Spleen (tissue), 13 donors: ENCODE measurements at regions of chr17 and their contacts with region 1.

Region 1: DNA sequence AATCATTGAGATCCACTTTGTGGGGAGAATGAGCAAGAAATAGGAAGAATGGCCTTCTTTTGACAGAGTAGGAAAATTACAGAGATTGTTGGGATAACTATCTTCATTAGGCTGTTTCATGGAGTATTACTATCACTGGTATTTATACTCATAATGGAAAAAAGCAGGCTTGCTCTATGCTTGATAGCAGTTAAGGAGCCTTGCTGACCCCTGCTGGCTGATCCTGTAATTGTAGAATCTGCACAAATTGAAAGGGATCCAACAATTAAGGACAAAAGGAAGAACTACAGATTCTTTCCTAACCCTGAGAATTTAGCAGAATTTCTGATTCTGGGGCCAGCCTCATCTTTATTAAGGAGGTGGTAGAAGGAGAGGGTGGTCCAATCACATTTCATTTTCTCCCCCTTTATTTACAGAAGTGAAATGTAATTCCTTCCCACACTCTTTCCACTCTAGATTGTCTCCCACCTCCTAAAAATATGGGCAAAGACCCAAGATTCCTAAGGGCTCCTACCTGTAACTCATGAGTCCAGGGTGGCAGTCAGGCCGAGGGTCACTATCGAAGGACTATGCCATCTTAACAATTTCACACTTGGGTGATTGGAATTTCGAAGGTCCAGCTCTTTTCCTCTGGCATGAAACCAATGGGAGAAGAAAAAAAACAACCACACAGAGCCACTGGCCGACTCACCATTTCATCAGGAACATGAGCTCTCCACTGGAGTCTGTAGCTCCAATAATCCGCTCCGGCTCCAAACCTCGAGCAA is 26.3 kb downstream of the NFE2L1 start:
- DNase-seq: peak; percentile 79
- H3K4me3 ChIP-seq: no peak overlapping the region
- H3K27ac ChIP-seq: no peak overlapping the region
- H3K4me1 ChIP-seq: peaks cover 0 to 16% (median 2%) of the 10 kb centered on the region in 6 donors
- H3K27me3 ChIP-seq: no peaks in the 10 kb centered on the region
- CTCF ChIP-seq: peak; percentile 38 to 87 (median 81)
- POLR2A ChIP-seq: no peak

Region 2: DNA sequence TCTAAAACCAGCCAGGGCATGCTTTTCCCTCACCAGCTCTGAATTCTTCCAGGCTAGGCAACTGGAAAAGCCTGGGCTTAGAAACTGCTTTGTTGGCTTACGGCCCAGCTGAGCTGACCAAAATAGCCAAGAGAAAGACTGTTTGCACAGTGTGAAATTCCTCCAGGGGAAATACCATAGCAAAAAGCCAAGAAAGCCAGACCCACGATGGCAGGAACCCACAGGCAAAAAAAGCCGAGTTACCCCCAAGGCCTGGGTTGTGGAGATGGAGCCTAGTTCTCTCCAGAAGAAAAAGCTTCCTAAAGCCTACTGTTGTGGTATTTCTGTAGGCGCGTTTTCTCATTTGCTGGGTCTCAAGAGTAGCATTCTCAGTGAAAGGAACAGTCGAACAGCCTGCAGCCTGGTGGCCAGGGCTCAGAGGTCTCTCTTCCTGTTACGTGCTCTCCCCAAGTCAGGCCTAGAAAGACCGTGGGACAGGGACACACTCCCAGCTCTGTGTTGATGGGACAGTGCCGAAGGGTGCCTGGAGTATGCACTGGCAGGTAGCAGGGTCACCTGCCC is 169.2 kb before region 1 on chr17:
- intact Hi-C with region 1: no loop called
- DNase-seq: no peak
- H3K4me3 ChIP-seq: no peak overlapping the region
- H3K27ac ChIP-seq: peak overlapping the region in 7 of 8 donors; percentile 35 to 75 (median 67)
- H3K4me1 ChIP-seq: peaks cover 0 to 75% (median 26%) of the 10 kb centered on the region in 6 donors
- H3K27me3 ChIP-seq: no peaks in the 10 kb centered on the region
- CTCF ChIP-seq: no peak
- POLR2A ChIP-seq: no peak

Region 3: DNA sequence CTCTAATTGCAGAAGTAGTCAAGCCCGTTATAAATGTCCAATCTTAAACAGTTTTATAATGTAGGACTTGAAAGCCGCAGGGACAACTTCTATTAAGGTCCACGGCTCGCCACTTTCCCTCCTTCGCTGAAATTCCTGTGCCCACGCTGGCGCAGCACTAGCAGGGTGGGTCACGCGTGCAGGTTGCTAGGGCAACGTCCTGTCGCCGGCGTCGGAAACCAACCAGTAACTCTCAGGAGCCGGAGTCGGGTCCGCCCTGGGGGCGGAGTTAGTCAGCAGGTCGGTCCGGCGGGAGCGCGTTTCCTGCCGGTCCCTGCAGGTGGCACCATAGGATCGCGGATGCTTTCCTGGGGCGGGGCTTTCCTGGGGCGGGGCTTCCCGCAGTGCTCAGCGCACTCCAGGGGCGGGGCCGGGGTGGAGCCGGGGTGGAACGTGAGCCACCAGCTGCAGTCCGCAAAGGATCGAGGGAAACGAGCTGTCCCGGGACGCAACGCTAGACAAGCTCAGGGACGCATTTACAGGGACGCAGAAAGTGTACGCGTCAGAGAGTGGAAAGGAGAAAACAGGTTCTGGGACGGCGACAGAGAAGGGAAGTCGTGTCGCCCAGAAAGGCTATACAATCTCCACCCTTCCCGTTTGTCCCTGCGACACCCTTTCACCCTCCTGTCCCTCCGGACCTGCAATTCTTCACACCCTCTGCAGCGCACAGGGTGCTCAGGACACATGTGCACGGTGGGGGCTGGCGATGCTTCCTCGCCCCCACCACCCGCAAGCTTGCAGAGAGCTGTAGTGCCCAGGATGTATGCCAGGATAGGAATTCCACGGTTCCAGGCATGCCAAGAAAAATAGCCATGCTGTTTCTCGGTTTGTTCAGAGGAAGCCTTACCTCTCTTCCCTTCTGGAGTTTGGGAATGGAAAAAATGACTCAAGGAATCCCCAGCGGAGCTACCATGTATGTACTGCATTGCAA is 49.3 kb before region 1 on chr17:
- intact Hi-C with region 1: loop called (anchors 2 kb)
- DNase-seq: peak; percentile 100
- H3K4me3 ChIP-seq: peak overlapping the region; percentile 33 to 70 (median 50)
- H3K27ac ChIP-seq: peak overlapping the region in 5 of 8 donors; percentile 35 to 82 (median 71)
- H3K4me1 ChIP-seq: peaks cover 26 to 62% (median 44%) of the 10 kb centered on the region in 6 donors
- H3K27me3 ChIP-seq: peaks cover 0 to 45% (median 5%) of the 10 kb centered on the region in 7 donors
- CTCF ChIP-seq: peak; percentile 87 to 99 (median 95)
- POLR2A ChIP-seq: no peak

Region 4: DNA sequence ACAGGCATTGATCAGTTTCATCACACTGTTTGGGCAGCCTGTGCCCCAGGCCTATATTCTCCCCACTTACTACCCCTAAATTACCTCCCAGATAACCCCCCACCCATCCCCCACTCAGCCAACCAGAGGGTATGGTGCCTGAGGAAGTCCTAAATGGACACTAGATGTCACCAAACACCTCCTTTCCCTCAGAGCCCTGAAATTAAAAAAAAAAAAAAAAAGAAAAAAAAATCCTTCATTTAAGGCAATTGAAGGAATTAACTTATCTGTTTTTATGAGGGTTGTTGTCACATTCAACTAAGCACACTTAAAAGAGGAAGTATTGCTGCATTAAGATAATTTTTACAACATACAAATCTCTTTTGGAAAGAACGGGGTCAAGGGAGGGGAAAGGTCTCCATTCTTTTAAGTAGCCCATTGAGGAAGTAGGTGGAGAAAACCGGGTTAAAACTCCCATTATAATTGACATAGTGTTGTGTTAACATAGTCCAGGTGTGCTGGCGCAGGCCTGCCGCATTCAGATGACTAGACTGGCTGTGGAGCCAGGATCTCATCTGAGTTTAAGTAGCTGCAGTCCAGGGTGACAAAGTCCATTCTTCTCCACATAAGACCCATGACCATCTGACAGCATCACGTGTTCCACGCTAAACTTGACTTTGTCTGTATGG is 79.3 kb after region 1 on chr17:
- intact Hi-C with region 1: no loop called
- DNase-seq: no peak
- H3K4me3 ChIP-seq: no peak overlapping the region
- H3K27ac ChIP-seq: no peak overlapping the region
- H3K4me1 ChIP-seq: peaks cover 0 to 11% (median 6%) of the 10 kb centered on the region in 6 donors
- H3K27me3 ChIP-seq: peaks cover 0 to 41% (median 15%) of the 10 kb centered on the region in 7 donors
- CTCF ChIP-seq: peak in 7 of 11 experiments; percentile 15 to 53 (median 43)
- POLR2A ChIP-seq: no peak